Right cardiac atrium (tissue), 5 donors: ENCODE measurements at regions of chr6 and their contacts with region 1.

Region 1: GRCh38 chr6:5401845-5402738 is 140.8 kb downstream of the FARS2 start:
- DNase-seq: no peak
- ATAC-seq: no peak
- H3K4me3 ChIP-seq: no peak overlapping the region
- H3K27ac ChIP-seq: no peak overlapping the region
- H3K4me1 ChIP-seq: no peaks in the 10 kb centered on the region
- H3K27me3 ChIP-seq: no peaks in the 10 kb centered on the region

Region 2: DNA sequence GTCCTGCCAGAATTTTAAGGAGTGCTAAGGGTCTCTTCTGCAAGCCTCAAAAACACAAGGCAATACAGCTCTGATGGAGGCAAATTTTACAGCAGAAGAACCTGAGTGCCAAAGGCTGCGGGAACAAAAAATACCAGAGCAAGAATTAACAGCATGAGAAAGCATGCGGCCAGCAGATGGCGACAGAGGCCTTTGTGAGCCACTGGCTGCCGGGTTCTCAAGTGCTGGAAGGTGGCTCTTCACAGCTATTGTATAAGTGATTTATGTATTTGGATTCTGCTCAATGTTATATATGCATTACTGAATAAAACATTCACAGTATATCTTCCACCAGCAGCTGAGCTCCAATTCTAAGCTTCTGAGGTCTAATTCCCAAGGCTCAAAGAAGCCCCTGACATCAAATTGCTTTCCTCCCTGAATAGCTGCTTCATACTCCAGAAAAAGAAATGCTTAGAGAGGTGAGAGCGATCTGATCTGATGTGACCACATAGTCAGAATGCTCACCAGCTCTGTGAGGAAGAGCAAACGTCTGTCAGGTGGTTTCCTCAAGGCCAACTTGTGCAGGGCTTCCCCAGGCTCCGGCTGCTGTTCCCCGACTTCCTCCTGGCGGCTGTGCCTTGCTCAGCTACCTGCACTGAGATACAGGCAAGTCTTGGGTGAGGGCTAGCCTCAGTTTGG is 258.3 kb before region 1 on chr6:
- intact Hi-C with region 1: loop called (anchors 5 to 10 kb)
- DNase-seq: peak; percentile 85 to 96 (median 93)
- ATAC-seq: peak; percentile 59 to 78
- H3K4me3 ChIP-seq: no peak overlapping the region
- H3K27ac ChIP-seq: no peak overlapping the region
- H3K4me1 ChIP-seq: no peaks in the 10 kb centered on the region
- H3K27me3 ChIP-seq: no peaks in the 10 kb centered on the region

Region 3: DNA sequence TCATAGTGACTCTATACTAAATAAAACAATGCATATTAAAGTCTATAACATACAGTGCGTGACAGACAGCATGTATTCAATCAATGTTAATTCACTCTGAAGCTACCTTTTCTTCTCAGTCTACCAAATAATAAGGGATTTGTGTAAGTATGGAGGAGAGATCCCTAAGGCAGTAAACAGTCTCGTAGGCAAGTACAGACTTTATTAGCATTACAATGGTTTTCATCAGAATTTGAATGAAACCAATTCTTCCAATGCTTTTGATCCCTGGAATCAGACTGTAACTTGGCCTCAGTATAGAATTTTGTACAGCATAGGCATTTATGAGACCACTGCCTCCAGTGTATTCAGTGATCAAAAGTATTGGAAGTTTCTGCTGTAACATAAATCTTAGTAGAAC is 160.8 kb before region 1 on chr6:
- intact Hi-C with region 1: no loop called
- DNase-seq: no peak
- ATAC-seq: no peak
- H3K4me3 ChIP-seq: no peak overlapping the region
- H3K27ac ChIP-seq: no peak overlapping the region
- H3K4me1 ChIP-seq: no peaks in the 10 kb centered on the region
- H3K27me3 ChIP-seq: no peaks in the 10 kb centered on the region

Region 4: GRCh38 chr6:5351552-5352210 is 50.4 kb before region 1 on chr6:
- intact Hi-C with region 1: no loop called
- DNase-seq: no peak
- ATAC-seq: no peak
- H3K4me3 ChIP-seq: no peak overlapping the region
- H3K27ac ChIP-seq: no peak overlapping the region
- H3K4me1 ChIP-seq: no peaks in the 10 kb centered on the region
- H3K27me3 ChIP-seq: no peaks in the 10 kb centered on the region

Region 5: GRCh38 chr6:5599127-5599526 is 197.0 kb after region 1 on chr6:
- intact Hi-C with region 1: no loop called
- DNase-seq: no peak
- ATAC-seq: no peak
- H3K4me3 ChIP-seq: no peak overlapping the region
- H3K27ac ChIP-seq: no peak overlapping the region
- H3K4me1 ChIP-seq: no peaks in the 10 kb centered on the region
- H3K27me3 ChIP-seq: no peaks in the 10 kb centered on the region